Activated T-helper 1 cell treated with anti-CD3 and anti-CD28 coated beads, Interleukin-12 subunit alpha, Interleukin-12 subunit beta, Interleukin-2, Interleukin-4 antibody, amounts not matched to agents 30 ng/mL and 10 ng/mL and 1 ng/mL, durations not matched to agents 14 hours and 24 hours and 36 hours (primary cell): ENCODE measurements at regions of chr6 and their contacts with region 1.

Region 1: GRCh38 chr6:149028767-149029405 is 282.1 kb downstream of the UST start:
- DNase-seq: peak; percentile 67
- H3K4me3 Mint-ChIP-seq: peak overlapping the region; percentile 77
- H3K27ac Mint-ChIP-seq: peak overlapping the region; percentile 87
- H3K4me1 Mint-ChIP-seq: peaks cover 57% of the 10 kb centered on the region
- H3K27me3 Mint-ChIP-seq: no peaks in the 10 kb centered on the region

Region 2: DNA sequence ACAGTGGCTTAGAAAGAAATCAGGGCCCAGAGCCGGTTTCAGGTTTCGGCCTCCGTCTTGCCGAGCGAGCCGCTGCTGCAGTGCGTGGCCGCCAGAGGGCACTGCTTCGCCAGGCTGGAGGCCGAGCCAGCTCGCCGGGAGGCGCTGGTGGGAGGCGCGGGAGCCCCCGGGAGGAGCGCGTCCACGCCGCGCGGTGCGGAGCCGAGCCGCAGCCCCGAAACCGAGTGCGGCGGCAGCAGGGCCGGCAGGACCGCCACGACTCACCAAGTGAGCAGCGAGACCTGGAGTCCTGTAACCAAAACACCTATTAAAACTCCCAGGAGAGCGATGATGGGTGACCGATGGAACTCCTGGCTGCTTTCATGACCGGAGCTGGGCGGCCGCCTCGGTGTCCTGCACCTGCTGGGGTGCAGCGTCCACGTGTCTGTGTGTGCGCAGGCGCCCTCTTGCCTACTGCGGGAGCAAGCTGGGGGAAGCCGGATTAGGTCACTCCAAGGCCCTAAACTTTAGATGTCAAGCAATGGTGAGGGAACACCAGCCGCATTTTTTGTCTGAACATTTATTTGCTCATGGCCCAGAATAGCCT is 468.9 kb before region 1 on chr6:
- intact Hi-C with region 1: loop called (anchors 10 kb)
- DNase-seq: peak; percentile 55
- H3K4me3 Mint-ChIP-seq: no peak overlapping the region
- H3K27ac Mint-ChIP-seq: no peak overlapping the region
- H3K4me1 Mint-ChIP-seq: peaks cover 7% of the 10 kb centered on the region
- H3K27me3 Mint-ChIP-seq: peaks cover 14% of the 10 kb centered on the region

Region 3: DNA sequence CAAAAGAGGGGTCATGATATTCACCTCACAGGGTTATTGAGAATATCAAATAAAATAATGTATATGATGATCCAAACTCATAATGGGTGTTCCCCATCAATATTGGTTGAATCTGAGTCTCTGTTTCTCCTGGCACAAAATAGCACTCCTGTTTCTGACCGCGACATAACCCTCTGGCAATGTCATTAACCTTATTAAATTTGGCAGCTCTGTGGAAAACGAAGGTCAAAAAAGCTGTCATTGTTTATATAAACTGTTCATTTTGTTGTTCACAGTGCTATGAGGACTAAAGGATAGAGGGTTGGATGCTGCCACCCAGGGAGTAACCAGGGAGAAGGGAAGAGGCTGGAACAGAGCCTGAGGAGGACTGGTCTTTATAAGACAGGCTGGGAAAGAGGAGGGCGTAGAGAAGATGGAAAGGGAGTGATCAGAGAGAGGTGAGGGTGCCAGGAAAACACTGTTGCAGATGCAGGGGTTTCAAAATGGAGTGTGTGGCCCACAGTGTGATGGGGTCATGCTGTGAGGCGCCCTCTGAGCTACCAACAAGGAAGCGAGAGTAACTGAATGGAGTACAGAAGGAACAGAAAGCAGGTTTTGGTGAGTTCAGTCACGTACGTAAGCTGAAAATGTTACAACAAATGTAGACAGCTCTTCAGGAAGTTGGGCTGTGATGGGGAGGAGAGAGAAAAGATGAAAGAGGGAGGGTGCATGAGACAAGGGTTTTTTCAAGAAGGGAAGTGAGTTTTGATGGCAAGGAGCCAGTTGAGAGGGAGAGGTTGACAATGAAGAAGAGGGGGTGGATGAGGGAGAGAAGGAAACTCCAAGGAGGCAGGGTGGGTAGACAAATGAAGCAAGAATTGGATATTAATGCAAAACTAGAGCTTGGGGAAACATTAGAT is 37.0 kb after region 1 on chr6:
- intact Hi-C with region 1: loop called (anchors 1 kb)
- DNase-seq: peak; percentile 54
- H3K4me3 Mint-ChIP-seq: peak overlapping the region; percentile 38
- H3K27ac Mint-ChIP-seq: peak overlapping the region; percentile 90
- H3K4me1 Mint-ChIP-seq: peaks cover 69% of the 10 kb centered on the region
- H3K27me3 Mint-ChIP-seq: no peaks in the 10 kb centered on the region

Region 4: GRCh38 chr6:149140137-149140909 is 111.4 kb after region 1 on chr6:
- intact Hi-C with region 1: loop called (anchors 1 kb)
- DNase-seq: peak; percentile 62
- H3K4me3 Mint-ChIP-seq: peak overlapping the region; percentile 84
- H3K27ac Mint-ChIP-seq: peak overlapping the region; percentile 100
- H3K4me1 Mint-ChIP-seq: peaks cover 64% of the 10 kb centered on the region
- H3K27me3 Mint-ChIP-seq: no peaks in the 10 kb centered on the region

Region 5: DNA sequence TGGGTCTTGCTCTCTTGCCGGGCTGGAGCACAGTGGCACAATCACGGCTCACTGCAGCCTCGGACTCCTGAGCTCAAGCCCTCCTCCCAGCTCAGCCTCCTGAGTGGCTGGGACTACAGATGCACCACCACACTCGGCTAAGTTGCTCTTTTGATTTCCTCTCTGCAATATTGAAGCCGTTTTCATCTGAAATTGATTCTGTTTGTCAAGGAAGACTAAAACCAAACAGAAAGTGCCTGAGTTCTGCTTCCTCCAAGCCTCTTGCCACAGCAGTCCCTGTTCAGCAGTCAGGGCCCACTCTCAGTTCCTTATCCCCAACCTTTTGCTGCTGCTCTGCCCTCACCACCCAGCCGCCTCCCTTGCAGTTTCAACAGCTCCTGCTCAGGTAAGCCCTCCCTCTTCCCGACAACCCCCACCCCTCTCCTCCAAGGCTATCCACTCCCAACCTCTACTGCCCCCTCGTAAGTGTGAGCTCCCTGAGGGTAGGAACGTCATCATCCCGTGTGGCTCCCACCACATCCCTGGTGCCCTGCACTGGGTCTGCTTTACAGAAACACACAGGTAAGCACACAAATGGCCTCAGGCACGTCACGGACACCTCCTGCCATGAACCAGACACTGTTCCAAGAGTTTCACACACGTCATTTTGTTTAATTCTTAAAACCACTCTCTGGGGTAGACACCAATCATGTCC is 218.0 kb after region 1 on chr6:
- intact Hi-C with region 1: no loop called
- DNase-seq: no peak
- H3K4me3 Mint-ChIP-seq: no peak overlapping the region
- H3K27ac Mint-ChIP-seq: peak overlapping the region; percentile 43
- H3K4me1 Mint-ChIP-seq: peaks cover 47% of the 10 kb centered on the region
- H3K27me3 Mint-ChIP-seq: no peaks in the 10 kb centered on the region

Region 6: GRCh38 chr6:149316798-149317655 is 288.1 kb after region 1 on chr6:
- intact Hi-C with region 1: loop called (anchors 1 kb)
- DNase-seq: peak; percentile 90
- H3K4me3 Mint-ChIP-seq: peak overlapping the region; percentile 85
- H3K27ac Mint-ChIP-seq: peak overlapping the region; percentile 85
- H3K4me1 Mint-ChIP-seq: peaks cover 39% of the 10 kb centered on the region
- H3K27me3 Mint-ChIP-seq: no peaks in the 10 kb centered on the region

Region 7: DNA sequence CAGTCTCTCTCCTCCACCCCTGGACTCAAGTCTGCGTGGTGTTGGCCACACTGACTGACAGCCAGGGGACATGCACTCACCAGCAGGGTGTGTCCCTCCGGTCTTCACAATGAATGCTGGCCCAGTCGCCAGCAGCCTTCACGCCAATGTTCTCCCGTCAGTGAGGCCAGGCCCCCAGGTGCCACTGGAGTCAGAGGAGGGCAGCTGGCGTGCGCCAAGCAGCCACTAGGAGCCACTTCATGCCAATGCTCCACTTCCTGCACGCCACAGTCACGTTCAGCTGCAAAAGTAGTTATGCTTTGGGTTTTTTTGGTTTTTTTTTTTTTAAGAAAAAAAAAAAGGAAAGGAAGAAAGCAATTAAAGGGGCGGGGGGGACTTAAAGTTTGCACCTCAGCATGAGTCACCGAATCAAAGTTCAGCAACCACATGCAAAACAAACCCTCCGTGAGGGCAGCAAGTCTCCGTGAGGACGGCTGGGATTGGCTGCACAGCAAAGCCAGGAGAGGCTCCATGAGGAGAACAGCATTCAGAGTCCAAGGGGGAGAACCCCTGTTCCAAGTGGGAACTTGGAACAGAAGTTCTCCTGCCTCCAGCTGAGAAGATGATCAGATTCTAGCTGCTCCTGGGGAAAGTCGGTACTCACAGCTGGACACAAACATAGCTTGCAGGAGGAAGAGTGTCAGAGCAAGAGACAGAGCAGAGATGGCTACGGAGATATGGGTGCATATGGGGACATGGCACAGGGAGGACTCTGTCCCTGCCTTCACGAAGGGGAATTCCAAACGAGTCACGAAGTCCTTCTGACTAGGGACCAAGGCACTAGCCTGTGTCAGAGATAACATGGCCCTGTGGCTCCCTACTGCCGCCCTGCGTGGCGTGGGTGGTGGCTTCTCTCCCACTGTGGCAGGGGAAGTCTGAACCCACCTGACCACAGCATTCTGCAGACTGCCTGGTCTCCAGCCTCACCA is 456.1 kb after region 1 on chr6 and contains the start of gene ZC3H12D:
- intact Hi-C with region 1: loop called (anchors 1 kb)
- DNase-seq: peak; percentile 76
- H3K4me3 Mint-ChIP-seq: peak within 1 kb of the TSS; percentile 92
- H3K27ac Mint-ChIP-seq: peak within 1 kb of the TSS; percentile 99
- H3K4me1 Mint-ChIP-seq: peaks cover 74% of the 10 kb centered on the region
- H3K27me3 Mint-ChIP-seq: no peaks in the 10 kb centered on the region
- total RNA-seq, gene ZC3H12D: 94.7 and 96.7 TPM in 2 replicates

Region 8: DNA sequence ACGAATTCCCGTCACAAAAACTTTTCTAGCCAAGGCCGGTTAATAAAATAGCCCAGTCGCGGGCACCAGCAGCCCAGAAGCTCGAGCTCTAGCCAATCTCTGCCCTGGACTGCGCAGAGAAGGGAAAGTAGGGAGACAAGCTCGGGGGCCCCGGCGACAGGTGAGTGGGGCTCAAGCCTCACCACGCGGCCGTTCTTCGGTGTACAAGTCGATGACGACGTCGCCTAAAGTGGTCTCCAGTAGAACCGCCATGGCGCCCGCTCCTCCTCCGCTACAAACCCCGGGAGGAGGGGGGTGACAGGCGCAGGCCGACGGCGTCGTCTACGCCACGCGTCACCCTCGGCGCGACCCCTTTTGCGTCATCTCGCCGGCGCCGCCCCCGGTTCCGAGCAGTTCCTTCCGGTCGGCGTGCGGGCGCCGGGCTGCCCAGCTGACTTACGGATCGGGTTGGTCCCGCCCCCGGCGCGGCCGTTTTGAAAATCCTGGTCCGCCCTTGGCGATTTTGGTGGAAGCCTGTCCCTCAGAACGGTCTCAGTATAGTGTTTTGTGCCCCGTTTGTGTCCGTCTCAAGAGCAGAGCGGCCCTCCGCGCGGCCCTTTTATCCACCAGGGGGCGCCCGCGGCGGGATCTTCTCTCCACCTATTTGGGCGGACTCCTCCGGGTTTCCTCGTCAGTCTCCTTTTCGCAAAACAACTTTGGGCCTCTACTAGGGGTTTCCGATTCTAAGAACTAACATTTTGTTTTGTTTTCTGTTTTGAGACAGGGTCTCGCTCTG is 517.1 kb after region 1 on chr6 and contains the start of gene PPIL4:
- intact Hi-C with region 1: loop called (anchors 1 kb)
- DNase-seq: peak; percentile 96
- H3K4me3 Mint-ChIP-seq: peak within 1 kb of the TSS; percentile 98
- H3K27ac Mint-ChIP-seq: peak within 1 kb of the TSS; percentile 99
- H3K4me1 Mint-ChIP-seq: peaks cover 31% of the 10 kb centered on the region
- H3K27me3 Mint-ChIP-seq: peaks cover 4% of the 10 kb centered on the region
- total RNA-seq, gene PPIL4: 25.0 and 26.1 TPM in 2 replicates